BJ (cell line): ENCODE measurements at regions of chr16 and their contacts with region 1.

Region 1: DNA sequence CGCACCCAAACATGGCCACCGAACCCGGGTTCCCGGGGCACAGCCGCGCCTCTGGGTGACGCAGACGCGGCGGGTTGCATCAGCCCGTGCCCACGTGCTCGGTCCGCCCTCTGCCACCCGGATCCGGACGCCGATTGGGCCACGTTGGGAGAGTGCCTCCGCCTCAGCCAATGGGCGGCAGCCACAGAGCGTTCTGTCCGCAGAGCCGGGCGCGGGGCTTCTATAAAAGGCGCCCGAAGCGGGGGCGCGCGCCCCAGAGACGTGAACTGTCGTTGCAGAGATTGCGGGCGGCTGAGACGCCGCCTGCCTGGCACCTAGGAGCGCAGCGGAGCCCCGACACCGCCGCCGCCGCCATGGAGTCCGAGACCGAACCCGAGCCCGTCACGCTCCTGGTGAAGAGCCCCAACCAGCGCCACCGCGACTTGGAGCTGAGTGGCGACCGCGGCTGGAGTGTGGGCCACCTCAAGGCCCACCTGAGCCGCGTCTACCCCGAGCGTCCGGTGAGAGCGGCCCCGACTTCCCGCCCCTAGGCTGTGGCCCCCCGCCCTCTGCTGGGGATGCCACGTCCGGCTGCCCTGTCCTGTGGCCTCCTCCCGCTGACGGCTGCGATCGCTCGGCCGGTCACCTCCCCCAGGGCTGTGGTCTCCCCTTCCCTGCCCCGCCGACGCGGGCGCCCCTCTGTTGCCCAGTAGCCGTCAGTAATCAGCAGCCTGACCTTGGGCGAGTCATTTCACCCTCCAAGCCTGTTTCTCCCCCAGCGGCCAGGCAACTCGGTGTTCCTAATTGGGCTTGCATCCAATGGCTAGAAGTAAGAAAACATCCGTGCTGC is at the start of gene HERPUD1:
- DNase-seq: peak; percentile 80
- H3K4me3 ChIP-seq: peak within 1 kb of the TSS; percentile 100
- H3K27me3 ChIP-seq: no peaks in the 10 kb centered on the region
- CTCF ChIP-seq: no peak
- polyA plus RNA-seq, gene HERPUD1: 306 and 363 TPM in 2 replicates

Region 2: GRCh38 chr16:56911771-56912571 is 20.1 kb before region 1 on chr16:
- CTCF ChIA-PET with region 1: interaction called, 5 read pairs
- POLR2A ChIA-PET with region 1: interaction called, 16 read pairs
- DNase-seq: no peak
- H3K4me3 ChIP-seq: no peak overlapping the region
- H3K27me3 ChIP-seq: no peaks in the 10 kb centered on the region
- CTCF ChIP-seq: no peak

Region 3: DNA sequence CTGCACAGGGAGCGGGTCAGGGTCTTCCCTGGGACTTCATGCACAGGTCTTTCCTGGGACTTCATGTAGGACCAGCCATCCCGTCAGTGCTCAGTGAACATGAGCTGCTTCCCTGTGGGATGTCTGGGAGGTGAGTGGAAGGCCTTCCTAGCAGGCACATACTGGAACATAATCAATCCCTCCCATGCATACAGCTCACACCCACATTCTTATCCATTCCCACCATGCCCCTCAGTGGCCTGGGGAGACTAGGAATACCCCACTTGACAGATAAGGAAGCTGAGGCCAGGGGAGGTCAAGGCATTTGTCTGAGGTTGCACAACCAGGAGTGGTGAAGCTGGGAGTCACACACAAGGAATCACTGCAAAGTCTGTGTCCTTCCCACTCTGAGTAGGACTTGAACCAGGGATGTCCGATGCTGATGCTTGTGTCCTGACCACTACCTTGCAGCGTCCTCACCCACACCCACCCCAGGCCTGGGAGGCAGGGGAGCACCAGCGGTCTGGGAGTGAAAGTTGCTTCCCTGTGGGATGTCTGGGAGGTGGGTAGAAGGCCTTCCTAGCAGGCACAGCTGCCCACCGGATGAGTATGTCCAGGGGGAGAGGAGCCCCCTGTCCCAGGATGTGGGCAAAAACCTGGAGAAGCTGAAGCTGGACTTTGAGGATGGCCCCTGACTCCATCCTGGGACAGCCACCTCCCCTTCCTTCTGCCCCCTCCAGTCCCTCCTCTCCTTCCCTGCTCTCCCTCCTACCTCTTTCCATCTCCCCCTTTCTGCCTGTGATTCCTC is 56.2 kb after region 1 on chr16:
- CTCF ChIA-PET with region 1: no interaction called
- POLR2A ChIA-PET with region 1: interaction called, 16 read pairs
- DNase-seq: no peak
- H3K4me3 ChIP-seq: peak overlapping the region; percentile 71
- H3K27me3 ChIP-seq: no peaks in the 10 kb centered on the region
- CTCF ChIP-seq: no peak